OCI-LY7 (cell line): ENCODE measurements at regions of chr2 and their contacts with region 1.

Region 1: DNA sequence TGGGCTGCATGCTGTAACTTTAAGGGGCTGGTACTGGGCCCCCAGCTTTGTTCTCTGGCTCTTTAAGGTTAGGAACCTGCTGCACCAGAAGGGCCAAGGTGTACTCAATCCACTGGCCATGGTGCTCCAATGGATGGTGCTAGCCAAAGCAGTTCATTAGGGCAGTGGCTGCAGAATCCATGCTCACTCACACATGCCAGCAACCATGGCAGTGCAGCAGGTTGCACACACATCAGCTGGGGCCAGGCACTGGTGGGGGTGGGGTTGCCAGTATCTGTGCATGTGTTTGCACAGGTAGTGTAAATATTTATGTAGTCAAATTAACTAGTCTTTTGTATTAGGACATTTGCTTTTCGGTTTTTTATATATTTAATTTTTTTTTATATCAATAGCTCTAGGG is 228.3 kb upstream of the EPC2 start:
- DNase-seq: no peak
- H3K4me3 ChIP-seq: no peak overlapping the region
- H3K27ac ChIP-seq: no peak overlapping the region
- H3K4me1 ChIP-seq: no peaks in the 10 kb centered on the region
- CTCF ChIP-seq: no peak

Region 2: DNA sequence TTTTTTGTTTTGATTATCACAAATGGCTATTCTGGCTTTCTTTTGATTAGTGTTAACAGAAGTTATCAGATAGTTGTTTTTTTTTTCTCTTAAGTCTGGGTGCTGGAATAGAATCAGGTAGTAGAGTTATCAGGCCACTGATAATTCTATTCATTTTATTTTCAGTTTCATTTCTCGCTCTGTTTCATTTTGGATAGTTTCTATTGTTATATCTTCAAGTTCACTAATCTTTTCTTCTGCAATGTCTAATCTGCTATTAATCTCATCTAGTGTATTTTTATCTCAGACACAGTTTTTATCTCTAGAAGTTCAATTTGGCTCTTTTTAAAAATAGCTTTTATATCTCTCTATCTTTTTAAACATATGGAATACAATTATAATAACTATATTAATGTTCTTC is 13.5 kb before region 1 on chr2:
- CTCF ChIA-PET with region 1: no interaction called
- POLR2A ChIA-PET with region 1: no interaction called
- intact Hi-C with region 1: no loop called
- DNase-seq: no peak
- H3K4me3 ChIP-seq: no peak overlapping the region
- H3K27ac ChIP-seq: no peak overlapping the region
- H3K4me1 ChIP-seq: no peaks in the 10 kb centered on the region
- CTCF ChIP-seq: no peak

Region 3: DNA sequence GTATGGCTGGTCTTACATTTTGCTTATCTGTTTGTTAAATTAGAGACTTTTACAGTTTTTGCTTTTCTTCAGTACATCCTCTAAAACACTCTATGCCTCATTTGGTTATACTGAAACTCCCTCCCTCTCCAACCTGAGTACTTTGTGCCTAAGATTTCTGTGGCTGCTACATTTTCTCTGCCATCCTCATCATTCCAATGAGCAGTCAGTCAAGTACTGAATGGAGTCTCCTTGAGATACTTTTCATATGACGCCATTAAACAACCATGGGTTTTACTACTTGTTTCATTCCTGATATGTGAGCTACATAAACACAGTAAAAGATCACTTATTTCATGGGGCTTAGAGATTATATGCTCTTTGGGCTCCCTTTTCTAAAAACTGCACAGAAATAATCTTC is 31.6 kb after region 1 on chr2:
- CTCF ChIA-PET with region 1: interaction called, 11 read pairs
- POLR2A ChIA-PET with region 1: no interaction called
- intact Hi-C with region 1: no loop called
- DNase-seq: no peak
- H3K4me3 ChIP-seq: no peak overlapping the region
- H3K27ac ChIP-seq: no peak overlapping the region
- H3K4me1 ChIP-seq: no peaks in the 10 kb centered on the region
- CTCF ChIP-seq: no peak

Region 4: DNA sequence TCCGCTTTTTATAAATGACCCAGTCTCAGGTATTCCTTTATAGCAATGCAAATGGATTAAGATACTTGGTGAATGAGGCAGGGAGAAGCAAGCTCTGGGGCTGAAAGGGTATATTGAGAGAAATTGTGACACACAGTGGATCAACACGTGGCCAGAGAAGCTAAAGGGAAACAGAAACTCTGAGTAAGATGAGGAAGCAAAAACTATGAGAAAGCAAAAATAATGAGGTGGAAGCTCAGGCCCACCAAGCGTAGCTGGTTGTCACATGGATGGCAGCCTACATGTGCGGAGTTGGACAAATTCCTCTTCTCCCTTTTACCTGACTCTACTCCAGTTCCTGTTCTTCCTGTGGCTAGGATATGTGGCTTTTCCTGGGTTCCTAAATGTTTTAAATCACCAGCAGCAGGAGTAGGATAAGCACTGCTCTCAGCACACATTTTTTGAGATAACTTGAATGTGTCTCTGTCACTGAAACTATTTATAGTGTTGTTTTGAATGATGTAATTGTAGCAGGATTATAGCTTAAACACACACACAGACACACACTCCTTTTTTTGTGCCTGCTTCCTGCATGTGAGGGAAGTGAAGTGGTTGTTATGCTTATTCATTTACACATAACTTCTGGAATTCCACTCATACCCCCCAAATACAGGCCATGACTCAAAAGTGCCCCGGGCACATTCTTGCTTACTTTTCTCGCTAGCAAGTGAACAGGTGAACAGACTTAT is 198.2 kb after region 1 on chr2:
- CTCF ChIA-PET with region 1: no interaction called
- POLR2A ChIA-PET with region 1: no interaction called
- intact Hi-C with region 1: no loop called
- DNase-seq: no peak
- H3K4me3 ChIP-seq: no peak overlapping the region
- H3K27ac ChIP-seq: no peak overlapping the region
- H3K4me1 ChIP-seq: no peaks in the 10 kb centered on the region
- CTCF ChIP-seq: no peak